ENCODE measurements at regions of chr2 and their contacts with region 1.

Region 1: GRCh38 chr2:161308178-161308955 is at the start of gene PSMD14:
- DNase-seq: peak; percentile 80
- ATAC-seq: peak; percentile 92
- H3K4me3 Mint-ChIP-seq: peak within 1 kb of the TSS; percentile 99
- H3K27ac Mint-ChIP-seq: peak within 1 kb of the TSS; percentile 97
- H3K4me1 Mint-ChIP-seq: peaks cover 33% of the 10 kb centered on the region
- H3K27me3 Mint-ChIP-seq: no peaks in the 10 kb centered on the region
- CTCF ChIP-seq: no peak
- total RNA-seq, gene PSMD14: 55.0 and 55.1 TPM in 2 replicates

Region 2: GRCh38 chr2:161243905-161244304 is 64.5 kb before region 1 on chr2:
- CTCF ChIA-PET with region 1: no interaction called
- POLR2A ChIA-PET with region 1: interaction called, 9 read pairs
- intact Hi-C with region 1: loop called (anchors 2 kb)
- DNase-seq: no peak
- ATAC-seq: no peak
- H3K4me3 Mint-ChIP-seq: peak overlapping the region; percentile 85
- H3K27ac Mint-ChIP-seq: peak overlapping the region; percentile 87
- H3K4me1 Mint-ChIP-seq: peaks cover 61% of the 10 kb centered on the region
- H3K27me3 Mint-ChIP-seq: no peaks in the 10 kb centered on the region
- CTCF ChIP-seq: no peak

Region 3: DNA sequence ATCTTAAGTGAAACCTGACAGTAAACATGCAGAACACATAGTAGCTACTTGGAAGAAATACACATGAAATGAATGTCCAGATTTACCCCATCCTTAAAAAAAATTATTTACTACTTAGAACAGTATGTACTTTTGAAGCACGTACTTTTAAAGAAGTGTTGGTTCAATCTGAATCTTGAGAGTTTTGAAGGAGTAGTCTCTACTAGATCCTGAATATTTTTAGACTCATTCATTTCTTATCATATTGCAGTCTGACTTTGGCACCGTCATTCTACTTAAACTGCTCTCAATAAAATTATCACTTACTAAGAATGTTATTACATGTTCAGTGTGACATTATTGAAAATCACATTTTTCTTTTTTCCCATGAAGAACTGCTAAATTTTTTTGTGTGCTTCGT is 577.9 kb after region 1 on chr2:
- CTCF ChIA-PET with region 1: no interaction called
- POLR2A ChIA-PET with region 1: no interaction called
- intact Hi-C with region 1: no loop called
- DNase-seq: no peak
- ATAC-seq: no peak
- H3K4me3 Mint-ChIP-seq: no peak overlapping the region
- H3K27ac Mint-ChIP-seq: no peak overlapping the region
- H3K4me1 Mint-ChIP-seq: no peaks in the 10 kb centered on the region
- H3K27me3 Mint-ChIP-seq: peaks cover 2% of the 10 kb centered on the region
- CTCF ChIP-seq: no peak

Region 4: DNA sequence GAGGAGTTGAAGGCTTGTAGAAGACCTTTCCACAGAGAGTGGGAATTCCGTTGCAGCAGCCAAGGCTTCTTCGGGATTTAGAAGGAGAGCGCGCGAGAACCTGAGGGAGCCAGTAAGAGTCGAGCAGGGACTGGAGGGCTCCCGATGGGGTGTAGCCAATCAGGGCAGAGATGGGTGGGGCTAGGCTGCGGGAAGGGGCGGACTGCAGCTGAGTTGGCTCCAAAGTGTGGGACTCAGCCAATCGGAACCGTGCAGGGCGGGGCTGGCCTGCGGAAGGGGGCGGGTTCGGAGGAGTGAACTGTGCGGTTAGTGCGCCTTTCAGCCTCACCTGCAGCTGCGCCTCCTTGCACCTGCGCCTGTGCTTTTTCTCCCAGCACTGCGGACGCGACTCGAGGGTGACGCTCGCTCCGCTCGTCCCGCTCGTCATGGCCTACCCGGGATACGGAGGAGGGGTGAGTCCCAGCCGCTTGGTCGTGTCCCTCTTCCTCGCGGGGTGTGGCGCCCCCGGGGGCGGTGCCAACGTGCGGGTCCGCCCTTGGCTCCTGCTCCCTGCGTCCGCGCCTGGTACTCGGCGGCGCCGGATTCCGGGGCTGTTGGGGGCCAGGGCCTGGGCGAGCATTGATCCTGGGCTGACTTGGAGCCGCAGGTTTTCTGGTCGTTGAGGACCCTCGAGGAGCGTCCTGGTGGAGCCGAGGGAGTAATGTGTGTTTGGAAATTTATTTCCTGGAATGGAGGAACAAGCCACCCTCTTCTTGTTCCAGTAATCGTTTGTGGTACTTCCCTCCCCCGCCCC is 1035.7 kb after region 1 on chr2 and contains the start of gene GCA:
- CTCF ChIA-PET with region 1: no interaction called
- POLR2A ChIA-PET with region 1: interaction called, 5 read pairs
- intact Hi-C with region 1: loop called (anchors 10 kb)
- DNase-seq: peak; percentile 99
- ATAC-seq: peak; percentile 98
- H3K4me3 Mint-ChIP-seq: peak within 1 kb of the TSS; percentile 91
- H3K27ac Mint-ChIP-seq: peak within 1 kb of the TSS; percentile 84
- H3K4me1 Mint-ChIP-seq: peaks cover 18% of the 10 kb centered on the region
- H3K27me3 Mint-ChIP-seq: no peaks in the 10 kb centered on the region
- CTCF ChIP-seq: no peak
- total RNA-seq, gene GCA: 31.3 and 33.9 TPM in 2 replicates